ENCODE measurements at regions of chr19 and their contacts with region 1.

Region 1: DNA sequence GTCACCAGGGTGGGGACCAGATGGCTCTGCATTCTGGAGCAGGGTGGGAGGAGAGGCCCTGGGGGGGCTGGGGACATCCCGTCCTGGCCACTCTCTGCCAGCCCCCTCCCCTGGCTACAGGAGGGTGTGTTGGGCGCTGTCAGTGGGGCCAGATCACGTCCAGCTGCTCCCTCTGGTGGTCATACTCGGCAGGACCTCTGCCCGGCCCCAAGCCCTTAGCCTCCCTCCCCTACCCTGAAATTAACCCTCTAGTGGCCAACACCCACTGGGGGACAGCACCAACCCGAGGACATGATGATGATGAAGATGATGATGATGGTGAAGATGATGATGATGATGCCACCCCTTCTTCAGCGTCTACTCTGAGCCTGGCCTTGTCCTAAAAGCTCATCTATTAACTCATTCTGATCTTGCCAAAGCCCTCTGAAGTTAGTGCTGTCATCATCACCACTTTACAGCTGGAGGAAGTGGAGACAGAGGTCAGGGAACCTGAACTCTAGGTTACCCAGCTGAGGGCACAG is 590 bp upstream of the LGI4 start:
- DNase-seq: no peak
- H3K4me3 ChIP-seq: no peak overlapping the region
- H3K27me3 ChIP-seq: peaks cover 2% of the 10 kb centered on the region; the same call in 1 of the 2 replicates
- CTCF ChIP-seq: peak; percentile 93

Region 2: DNA sequence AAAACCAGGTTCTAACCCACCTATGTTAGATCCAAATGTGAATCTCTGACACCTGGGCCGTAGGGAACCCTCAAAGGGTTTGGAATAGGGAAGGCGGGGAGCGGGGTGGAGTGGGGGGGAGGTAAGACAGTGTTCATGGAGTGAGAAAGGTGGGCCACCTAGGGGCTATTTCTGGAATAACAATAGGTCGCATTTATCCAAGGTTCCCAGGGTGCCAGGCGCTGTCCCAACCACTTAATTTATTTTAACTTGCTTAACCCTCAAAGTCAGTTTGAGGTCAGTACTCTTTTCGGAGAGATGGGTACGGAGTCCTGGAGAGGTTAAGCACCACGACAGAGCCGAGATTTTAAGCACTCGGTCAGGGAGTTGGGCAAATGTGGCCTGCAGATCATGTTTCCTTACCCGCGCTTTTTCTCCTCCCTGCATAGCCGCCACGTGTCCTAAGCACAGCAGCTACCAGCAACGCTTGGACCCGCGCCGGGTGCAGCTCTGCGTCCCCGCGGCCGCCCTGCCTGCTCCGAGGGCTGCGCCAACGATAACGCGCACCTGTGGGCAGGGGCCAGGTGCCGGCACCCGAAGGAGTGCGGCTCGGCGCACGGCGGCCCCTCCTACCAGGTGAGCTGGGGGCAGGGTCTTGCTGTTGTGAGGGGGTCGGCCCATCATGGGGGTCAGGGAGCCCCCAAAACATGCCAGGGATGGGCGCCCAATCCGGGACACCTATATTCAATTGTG is 44.8 kb before region 1 on chr19:
- CTCF ChIA-PET with region 1: interaction called, 14 read pairs
- POLR2A ChIA-PET with region 1: no interaction called
- DNase-seq: no peak
- H3K4me3 ChIP-seq: no peak overlapping the region
- H3K27me3 ChIP-seq: no peaks in the 10 kb centered on the region
- CTCF ChIP-seq: peak; percentile 69

Region 3: DNA sequence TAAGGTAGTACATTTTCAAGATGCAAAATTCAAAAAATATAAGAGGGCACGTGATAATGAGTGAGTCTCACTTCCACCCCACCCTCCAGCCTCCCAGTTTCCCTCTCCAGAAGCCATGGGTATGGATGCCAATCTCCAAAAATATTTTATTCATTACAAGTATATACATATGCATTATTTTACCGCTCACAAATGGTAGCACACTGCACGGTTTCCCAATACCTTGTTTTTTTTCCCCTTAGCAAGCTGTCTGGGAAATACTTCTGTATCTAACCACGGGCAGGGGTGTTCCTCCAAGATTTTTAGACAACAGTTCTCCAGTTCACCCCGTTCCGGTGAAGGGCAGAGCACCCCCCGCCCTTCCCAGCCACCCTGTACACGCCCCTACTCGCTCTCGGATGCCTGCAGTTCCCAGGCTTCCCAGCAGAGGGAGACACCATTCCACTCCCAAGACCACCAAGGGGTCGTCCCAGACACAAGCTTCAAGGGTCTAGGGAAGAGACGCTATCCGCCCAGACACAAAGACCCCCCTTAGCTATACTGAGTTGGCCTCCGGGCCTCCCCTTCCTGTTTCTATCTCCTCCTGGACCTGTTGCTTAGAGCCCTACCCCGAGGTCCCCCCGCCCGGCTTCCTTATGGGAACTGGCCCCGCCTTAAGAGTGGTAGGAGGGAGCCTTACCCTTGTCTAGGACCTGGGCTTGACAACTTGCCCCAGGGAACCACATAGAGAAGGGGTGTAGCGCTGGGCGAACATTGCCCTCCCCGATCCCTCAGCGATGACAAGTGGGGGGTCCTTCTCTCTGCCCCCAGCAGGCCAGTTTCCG is 20.9 kb before region 1 on chr19:
- CTCF ChIA-PET with region 1: interaction called, 59 read pairs
- POLR2A ChIA-PET with region 1: no interaction called
- DNase-seq: no peak
- H3K4me3 ChIP-seq: no peak overlapping the region
- H3K27me3 ChIP-seq: peaks cover 10% of the 10 kb centered on the region
- CTCF ChIP-seq: peak; percentile 99

Region 4: DNA sequence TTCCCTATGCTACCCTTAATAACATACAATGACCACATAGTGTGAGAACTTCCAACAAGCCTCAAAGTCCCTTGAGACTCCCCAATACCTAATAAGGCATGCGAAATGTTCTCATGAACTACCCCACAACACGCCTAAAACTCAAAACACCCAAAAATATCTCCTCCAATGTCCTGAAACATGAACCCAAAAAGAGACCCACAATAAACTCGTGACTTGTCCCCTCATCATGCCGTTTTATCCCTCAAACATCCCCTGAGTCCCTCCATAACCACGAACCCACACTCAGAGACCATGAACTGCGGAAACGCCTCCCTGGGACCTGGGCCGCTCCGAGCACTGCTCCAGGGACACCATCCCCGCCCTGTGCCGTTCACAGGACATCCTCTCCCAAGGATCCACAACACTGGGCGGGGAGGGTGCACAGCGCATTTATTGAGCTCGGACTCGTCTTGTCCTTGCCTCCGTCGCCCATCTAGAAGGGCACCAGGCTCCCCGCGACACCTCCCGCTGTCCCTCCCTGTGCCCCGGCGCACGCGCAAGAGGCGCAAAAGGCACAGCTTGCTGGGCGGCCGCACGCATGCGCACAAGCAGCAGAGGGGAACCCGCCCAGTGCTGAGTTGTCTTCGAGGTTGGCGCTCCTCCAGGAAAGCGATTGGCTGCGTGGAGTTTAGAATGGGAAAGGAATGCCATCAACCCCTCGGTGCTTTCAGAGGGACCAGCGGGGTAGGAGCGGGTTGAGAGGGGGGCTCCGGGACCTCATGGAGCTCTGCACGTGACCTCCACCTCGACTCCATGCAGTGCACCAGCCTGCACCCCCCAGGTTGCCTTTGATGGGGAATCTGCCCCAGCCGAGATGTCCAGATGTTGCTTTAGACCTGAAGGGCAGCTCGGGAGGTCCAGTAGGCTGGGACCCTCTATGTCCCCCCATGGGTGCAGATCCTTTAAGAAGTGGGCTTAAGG is 11.1 kb before region 1 on chr19:
- CTCF ChIA-PET with region 1: interaction called, 26 read pairs
- POLR2A ChIA-PET with region 1: no interaction called
- DNase-seq: peak; percentile 53
- H3K4me3 ChIP-seq: peak overlapping the region; percentile 52
- H3K27me3 ChIP-seq: no peaks in the 10 kb centered on the region; the same call in 1 of the 2 replicates
- CTCF ChIP-seq: no peak

Region 5: DNA sequence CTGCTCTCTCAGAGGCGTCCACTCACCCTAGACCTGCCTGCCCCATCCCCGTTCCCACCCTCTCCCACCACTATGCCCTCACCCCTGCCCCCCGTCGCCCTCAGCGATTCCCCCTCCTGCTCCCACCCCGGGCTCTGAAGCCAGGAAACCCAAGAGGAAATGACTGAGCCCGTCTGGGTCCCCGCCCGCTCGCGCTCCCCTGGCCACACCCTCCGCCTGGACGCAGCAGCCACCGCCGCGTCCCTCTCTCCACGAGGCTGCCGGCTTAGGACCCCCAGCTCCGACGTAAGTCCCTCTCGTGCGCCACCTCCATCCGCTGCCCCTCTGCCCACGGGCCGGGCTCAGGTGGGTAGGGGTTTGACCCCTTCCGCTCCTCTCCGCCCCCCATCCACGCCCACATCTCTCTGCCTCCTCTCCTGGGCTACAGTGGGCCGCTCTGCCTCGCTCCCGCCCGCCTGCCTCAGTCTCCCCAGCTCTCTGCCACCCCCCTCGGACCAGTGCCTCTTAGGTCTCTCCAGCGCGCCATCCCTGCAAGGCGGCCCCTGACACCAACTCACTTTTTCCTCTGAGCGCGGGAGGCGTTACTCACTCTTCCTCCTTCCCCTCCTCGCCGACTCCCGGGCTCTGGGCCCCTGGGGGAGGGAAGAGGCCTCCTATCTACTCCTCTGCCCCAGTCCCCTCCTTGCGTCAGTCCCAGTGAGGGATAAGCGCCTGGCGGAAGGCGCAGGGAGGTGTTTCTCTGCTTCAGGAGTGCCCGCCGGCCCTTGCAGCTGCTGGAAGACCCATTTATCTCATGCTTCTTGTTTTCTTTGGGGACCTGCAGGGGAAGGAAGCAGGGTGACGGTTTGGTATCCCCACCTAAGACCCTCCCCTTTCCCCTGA is 19.3 kb after region 1 on chr19 and contains the start of gene FXYD5:
- CTCF ChIA-PET with region 1: interaction called, 12 read pairs
- POLR2A ChIA-PET with region 1: no interaction called
- DNase-seq: no peak
- H3K4me3 ChIP-seq: peak within 1 kb of the TSS; percentile 84
- H3K27me3 ChIP-seq: no peaks in the 10 kb centered on the region
- CTCF ChIP-seq: peak; percentile 17; the same call in 1 of the 2 replicates
- polyA plus RNA-seq, gene FXYD5: 248 and 332 TPM in 2 replicates

Region 6: DNA sequence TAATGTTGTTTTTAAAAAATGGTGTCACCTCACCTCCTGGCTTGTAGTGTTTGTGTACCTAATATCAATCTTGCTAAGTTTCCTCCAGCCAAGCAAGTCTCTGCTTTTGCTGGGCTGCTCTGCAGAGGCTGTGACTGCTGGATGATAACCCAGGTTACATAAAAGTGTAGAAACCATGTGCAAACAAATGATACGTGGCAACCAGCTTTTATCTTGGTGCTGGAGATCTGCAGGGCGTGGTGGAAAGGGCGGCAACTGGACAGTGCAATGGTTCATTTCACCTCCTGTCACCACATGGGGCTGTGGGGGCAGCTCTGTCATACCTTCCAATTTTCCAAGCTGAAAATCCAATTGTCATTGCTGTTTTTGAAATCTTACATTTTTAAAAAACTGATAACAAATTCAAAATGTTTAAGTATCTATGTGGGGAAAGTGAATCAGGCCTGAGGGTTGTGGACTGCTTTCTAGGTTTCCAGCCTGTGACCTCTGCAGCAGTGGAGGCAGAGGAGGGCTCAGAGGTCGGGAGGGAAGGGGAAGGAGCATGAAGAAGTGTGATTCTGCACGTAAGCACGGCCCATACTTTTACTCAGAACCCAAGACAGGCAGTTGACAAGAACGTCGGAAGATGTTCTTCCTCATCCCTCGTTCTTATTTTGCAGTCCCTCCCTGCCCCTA is 245.1 kb after region 1 on chr19:
- CTCF ChIA-PET with region 1: no interaction called
- POLR2A ChIA-PET with region 1: no interaction called
- DNase-seq: no peak
- H3K4me3 ChIP-seq: no peak overlapping the region
- H3K27me3 ChIP-seq: no peaks in the 10 kb centered on the region
- CTCF ChIP-seq: no peak